Naive thymus-derived CD4-positive, alpha-beta T cell (primary cell): ENCODE measurements at regions of chr15 and their contacts with region 1.

Region 1: GRCh38 chr15:78108299-78109084 is 16.1 kb downstream of the SH2D7 start:
- DNase-seq: peak; percentile 73 to 86 (median 82)
- ATAC-seq: peak; percentile 91
- H3K4me3 ChIP-seq: no peak overlapping the region
- H3K4me3 Mint-ChIP-seq: peak overlapping the region in 1 of 10 donors; percentile 40
- H3K27ac ChIP-seq: no peak overlapping the region
- H3K27ac Mint-ChIP-seq: peak overlapping the region in 6 of 9 donors; percentile 14 to 69 (median 52)
- H3K4me1 ChIP-seq: peaks cover 18 to 32% of the 10 kb centered on the region in 2 donors
- H3K4me1 Mint-ChIP-seq: peaks cover 25 to 57% (median 28%) of the 10 kb centered on the region in 7 donors
- H3K27me3 ChIP-seq: no peaks in the 10 kb centered on the region
- H3K27me3 Mint-ChIP-seq: no peaks in the 10 kb centered on the region

Region 2: GRCh38 chr15:77901974-77902750 is 206.3 kb before region 1 on chr15:
- CTCF ChIA-PET with region 1: no interaction called
- POLR2A ChIA-PET with region 1: no interaction called
- intact Hi-C with region 1: no loop called
- DNase-seq: no peak
- ATAC-seq: no peak
- H3K4me3 ChIP-seq: no peak overlapping the region
- H3K4me3 Mint-ChIP-seq: no peak overlapping the region
- H3K27ac ChIP-seq: no peak overlapping the region
- H3K27ac Mint-ChIP-seq: no peak overlapping the region
- H3K4me1 ChIP-seq: no peaks in the 10 kb centered on the region
- H3K4me1 Mint-ChIP-seq: no peaks in the 10 kb centered on the region
- H3K27me3 ChIP-seq: no peaks in the 10 kb centered on the region
- H3K27me3 Mint-ChIP-seq: peaks cover 0 to under 1% (median 0%) of the 10 kb centered on the region in 5 donors

Region 3: GRCh38 chr15:77959432-77959879 is 149.0 kb before region 1 on chr15:
- CTCF ChIA-PET with region 1: interaction called, 84 read pairs
- POLR2A ChIA-PET with region 1: interaction called, 5 read pairs
- intact Hi-C with region 1: loop called (anchors 1 kb)
- DNase-seq: peak; percentile 41 to 81 (median 57)
- ATAC-seq: peak; percentile 97
- H3K4me3 ChIP-seq: no peak overlapping the region
- H3K4me3 Mint-ChIP-seq: peak overlapping the region in 5 of 10 donors; percentile 14 to 52 (median 35)
- H3K27ac ChIP-seq: no peak overlapping the region
- H3K27ac Mint-ChIP-seq: no peak overlapping the region
- H3K4me1 ChIP-seq: peaks cover 0 to 4% of the 10 kb centered on the region in 2 donors
- H3K4me1 Mint-ChIP-seq: peaks cover 0 to 17% (median 4%) of the 10 kb centered on the region in 7 donors
- H3K27me3 ChIP-seq: no peaks in the 10 kb centered on the region
- H3K27me3 Mint-ChIP-seq: peaks cover 5 to 38% (median 7%) of the 10 kb centered on the region in 5 donors

Region 4: GRCh38 chr15:78018946-78019644 is 89.4 kb before region 1 on chr15:
- CTCF ChIA-PET with region 1: interaction called, 16 read pairs
- POLR2A ChIA-PET with region 1: no interaction called
- intact Hi-C with region 1: no loop called
- DNase-seq: peak in 1 of 9 donors; percentile 22
- ATAC-seq: peak; percentile 88
- H3K4me3 ChIP-seq: no peak overlapping the region
- H3K4me3 Mint-ChIP-seq: peak overlapping the region in 6 of 10 donors; percentile 7 to 44 (median 30)
- H3K27ac ChIP-seq: no peak overlapping the region
- H3K27ac Mint-ChIP-seq: peak overlapping the region; percentile 33 to 90 (median 65)
- H3K4me1 ChIP-seq: no peaks in the 10 kb centered on the region
- H3K4me1 Mint-ChIP-seq: peaks cover 14 to 39% (median 20%) of the 10 kb centered on the region in 7 donors
- H3K27me3 ChIP-seq: no peaks in the 10 kb centered on the region
- H3K27me3 Mint-ChIP-seq: no peaks in the 10 kb centered on the region

Region 5: GRCh38 chr15:78077058-78077877 is 31.2 kb before region 1 on chr15 and contains the start of gene TBC1D2B:
- CTCF ChIA-PET with region 1: interaction called, 7 read pairs
- POLR2A ChIA-PET with region 1: no interaction called
- intact Hi-C with region 1: loop called (anchors 1 to 2 kb)
- DNase-seq: peak; percentile 51 to 79 (median 65)
- ATAC-seq: peak; percentile 90
- H3K4me3 ChIP-seq: peak within 1 kb of the TSS; percentile 98
- H3K4me3 Mint-ChIP-seq: peak within 1 kb of the TSS; percentile 92 to 100 (median 98)
- H3K27ac ChIP-seq: peak within 1 kb of the TSS; percentile 70
- H3K27ac Mint-ChIP-seq: peak within 1 kb of the TSS; percentile 88 to 98 (median 95)
- H3K4me1 ChIP-seq: peaks cover 33 to 34% of the 10 kb centered on the region in 2 donors
- H3K4me1 Mint-ChIP-seq: peaks cover 36 to 56% (median 46%) of the 10 kb centered on the region in 7 donors
- H3K27me3 ChIP-seq: no peaks in the 10 kb centered on the region
- H3K27me3 Mint-ChIP-seq: no peaks in the 10 kb centered on the region
- total RNA-seq, gene TBC1D2B: 69.7 to 119 (median 86.1) TPM

Region 6: DNA sequence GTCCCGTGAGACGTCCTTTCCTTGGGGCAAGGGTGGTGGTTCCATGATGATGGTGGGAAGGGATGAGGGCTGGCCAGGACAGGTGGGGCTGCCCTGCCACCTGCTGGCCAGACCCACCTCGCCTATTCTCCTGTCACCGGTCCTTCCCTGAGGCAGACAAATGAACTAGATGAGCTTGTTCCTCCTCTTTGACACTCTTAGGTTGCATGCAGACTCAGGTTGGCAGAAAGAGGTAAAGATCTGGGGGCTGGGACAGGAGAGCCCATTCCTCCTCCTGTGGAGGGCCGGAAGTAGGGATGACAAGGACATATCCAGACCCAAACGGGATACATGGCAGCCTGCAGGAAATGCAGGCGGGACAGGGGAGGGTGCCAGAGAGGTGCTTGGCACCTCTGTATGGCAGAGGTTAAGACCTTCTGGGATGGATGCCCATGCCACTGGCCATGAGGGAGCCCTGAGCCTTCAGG is 87.3 kb after region 1 on chr15:
- CTCF ChIA-PET with region 1: interaction called, 101 read pairs
- POLR2A ChIA-PET with region 1: interaction called, 4 read pairs
- intact Hi-C with region 1: loop called (anchors 1 kb)
- DNase-seq: peak; percentile 22 to 61 (median 46)
- ATAC-seq: peak; percentile 82
- H3K4me3 ChIP-seq: no peak overlapping the region
- H3K4me3 Mint-ChIP-seq: no peak overlapping the region
- H3K27ac ChIP-seq: no peak overlapping the region
- H3K27ac Mint-ChIP-seq: peak overlapping the region in 1 of 9 donors; percentile 36
- H3K4me1 ChIP-seq: no peaks in the 10 kb centered on the region
- H3K4me1 Mint-ChIP-seq: peaks cover 0 to 9% (median 0%) of the 10 kb centered on the region in 7 donors
- H3K27me3 ChIP-seq: no peaks in the 10 kb centered on the region
- H3K27me3 Mint-ChIP-seq: peaks cover 0 to 11% (median 0%) of the 10 kb centered on the region in 5 donors

Region 7: DNA sequence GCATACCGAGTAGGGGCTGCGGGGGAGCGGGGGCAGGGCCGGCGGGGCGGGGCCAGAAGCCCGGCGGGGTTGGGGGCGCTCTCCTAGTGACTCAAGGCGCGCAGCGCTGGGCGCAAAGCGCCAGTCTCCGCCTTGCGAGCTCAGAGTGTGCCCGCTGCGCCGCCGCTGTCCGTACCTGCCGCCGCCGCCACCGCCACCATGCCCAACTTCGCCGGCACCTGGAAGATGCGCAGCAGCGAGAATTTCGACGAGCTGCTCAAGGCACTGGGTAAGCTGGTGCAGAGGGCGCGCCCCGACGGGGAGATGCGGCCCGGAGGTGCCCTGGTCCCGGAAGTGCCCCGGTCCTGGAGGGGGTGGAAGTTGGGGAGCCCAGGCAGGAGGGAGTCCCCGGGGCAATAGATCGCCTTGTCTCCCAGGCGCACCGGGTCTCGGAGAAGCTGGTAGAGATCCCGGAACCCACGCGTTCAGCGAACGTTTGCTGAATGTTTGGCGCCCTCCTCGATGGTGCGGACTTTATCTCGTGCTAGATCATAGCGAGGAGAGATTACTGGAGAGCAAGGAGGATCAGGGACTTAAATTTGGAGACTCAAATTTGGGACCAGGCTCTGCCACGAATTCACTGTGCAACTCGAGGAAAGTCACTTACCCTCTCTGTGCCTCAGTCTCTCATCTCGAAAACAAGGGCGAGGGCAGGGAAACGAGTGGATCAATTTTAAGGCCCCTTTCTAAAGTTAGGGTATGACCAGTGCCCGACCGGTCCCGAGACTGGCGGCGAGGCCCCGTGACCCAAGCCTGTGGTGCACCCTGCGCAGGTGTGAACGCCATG is 232.0 kb after region 1 on chr15 and contains the start of gene CRABP1:
- CTCF ChIA-PET with region 1: no interaction called
- POLR2A ChIA-PET with region 1: no interaction called
- intact Hi-C with region 1: no loop called
- DNase-seq: no peak
- ATAC-seq: no peak
- H3K4me3 ChIP-seq: no peak within 1 kb of the TSS
- H3K4me3 Mint-ChIP-seq: peak within 1 kb of the TSS in 2 of 10 donors; percentile 13 to 40
- H3K27ac ChIP-seq: no peak within 1 kb of the TSS
- H3K27ac Mint-ChIP-seq: no peak within 1 kb of the TSS
- H3K4me1 ChIP-seq: no peaks in the 10 kb centered on the region
- H3K4me1 Mint-ChIP-seq: peaks cover 0 to 9% (median 4%) of the 10 kb centered on the region in 7 donors
- H3K27me3 ChIP-seq: peaks cover 0 to 10% of the 10 kb centered on the region in 2 donors
- H3K27me3 Mint-ChIP-seq: peaks cover 29 to 68% (median 47%) of the 10 kb centered on the region in 5 donors
- total RNA-seq, gene CRABP1: not detected

Region 8: DNA sequence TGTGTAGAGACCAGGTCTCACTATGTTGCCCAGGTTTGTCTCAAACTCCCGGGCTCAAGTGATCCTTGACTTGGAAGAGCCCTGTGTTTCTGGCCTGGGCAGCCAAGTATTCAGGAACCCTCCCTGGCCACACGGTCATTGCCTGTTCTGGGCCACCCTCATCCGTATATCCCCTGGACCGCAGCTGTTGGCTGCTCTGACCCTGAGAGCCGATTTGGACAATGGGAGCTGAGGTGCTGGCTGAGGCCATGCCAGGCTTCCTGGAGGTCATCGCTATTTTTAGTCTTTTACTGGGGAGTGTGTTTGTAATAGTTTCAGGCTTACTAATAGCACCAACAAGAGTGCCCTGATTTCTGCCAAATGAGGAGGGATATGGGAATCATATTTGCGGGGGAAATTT is 642.1 kb after region 1 on chr15:
- CTCF ChIA-PET with region 1: no interaction called
- POLR2A ChIA-PET with region 1: no interaction called
- intact Hi-C with region 1: loop called in 1 of 2 experiments (anchors 1 kb)
- DNase-seq: no peak
- ATAC-seq: no peak
- H3K4me3 ChIP-seq: no peak overlapping the region
- H3K4me3 Mint-ChIP-seq: peak overlapping the region; percentile 29 to 76 (median 58)
- H3K27ac ChIP-seq: no peak overlapping the region
- H3K27ac Mint-ChIP-seq: peak overlapping the region in 2 of 9 donors; percentile 22 to 43
- H3K4me1 ChIP-seq: peaks cover 0 to 6% of the 10 kb centered on the region in 2 donors
- H3K4me1 Mint-ChIP-seq: peaks cover 4 to 6% (median 5%) of the 10 kb centered on the region in 7 donors
- H3K27me3 ChIP-seq: no peaks in the 10 kb centered on the region
- H3K27me3 Mint-ChIP-seq: no peaks in the 10 kb centered on the region

Region 9: DNA sequence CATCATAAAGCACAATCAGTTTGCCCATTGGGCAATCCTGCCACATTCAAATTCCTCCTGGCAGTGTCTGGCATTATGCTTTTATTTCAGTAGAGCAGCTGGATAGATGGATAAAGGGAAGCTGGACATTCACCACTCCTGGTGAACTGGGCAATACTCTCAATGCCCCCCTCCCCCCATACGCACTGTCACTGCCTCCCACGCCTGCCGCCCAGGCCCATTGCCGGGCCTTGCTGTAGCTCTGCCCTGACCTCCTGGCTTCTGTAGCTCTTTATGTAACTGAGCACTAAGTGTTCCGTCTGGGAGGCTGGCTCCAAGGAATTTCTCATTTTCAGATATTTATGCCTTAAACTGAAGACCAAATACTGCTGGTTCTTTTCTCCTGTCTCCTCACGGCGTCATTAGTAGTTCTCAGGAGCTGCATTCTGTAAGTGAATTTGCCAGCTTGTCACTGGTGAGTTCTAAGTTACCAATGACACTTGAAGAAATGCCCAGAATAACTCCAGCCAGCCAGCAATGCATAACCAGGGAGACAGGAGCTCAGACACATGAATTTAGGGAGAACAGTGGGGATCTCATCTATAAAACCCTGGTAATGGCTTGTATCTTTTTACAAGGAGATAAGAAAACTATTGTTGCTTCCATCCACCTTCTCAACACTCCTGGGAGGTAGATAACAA is 1007.6 kb after region 1 on chr15:
- CTCF ChIA-PET with region 1: no interaction called
- POLR2A ChIA-PET with region 1: no interaction called
- intact Hi-C with region 1: no loop called
- DNase-seq: no peak
- ATAC-seq: no peak
- H3K4me3 ChIP-seq: no peak overlapping the region
- H3K4me3 Mint-ChIP-seq: no peak overlapping the region
- H3K27ac ChIP-seq: no peak overlapping the region
- H3K27ac Mint-ChIP-seq: no peak overlapping the region
- H3K4me1 ChIP-seq: no peaks in the 10 kb centered on the region
- H3K4me1 Mint-ChIP-seq: no peaks in the 10 kb centered on the region
- H3K27me3 ChIP-seq: no peaks in the 10 kb centered on the region
- H3K27me3 Mint-ChIP-seq: peaks cover 8 to 28% (median 21%) of the 10 kb centered on the region in 5 donors

Region 10: DNA sequence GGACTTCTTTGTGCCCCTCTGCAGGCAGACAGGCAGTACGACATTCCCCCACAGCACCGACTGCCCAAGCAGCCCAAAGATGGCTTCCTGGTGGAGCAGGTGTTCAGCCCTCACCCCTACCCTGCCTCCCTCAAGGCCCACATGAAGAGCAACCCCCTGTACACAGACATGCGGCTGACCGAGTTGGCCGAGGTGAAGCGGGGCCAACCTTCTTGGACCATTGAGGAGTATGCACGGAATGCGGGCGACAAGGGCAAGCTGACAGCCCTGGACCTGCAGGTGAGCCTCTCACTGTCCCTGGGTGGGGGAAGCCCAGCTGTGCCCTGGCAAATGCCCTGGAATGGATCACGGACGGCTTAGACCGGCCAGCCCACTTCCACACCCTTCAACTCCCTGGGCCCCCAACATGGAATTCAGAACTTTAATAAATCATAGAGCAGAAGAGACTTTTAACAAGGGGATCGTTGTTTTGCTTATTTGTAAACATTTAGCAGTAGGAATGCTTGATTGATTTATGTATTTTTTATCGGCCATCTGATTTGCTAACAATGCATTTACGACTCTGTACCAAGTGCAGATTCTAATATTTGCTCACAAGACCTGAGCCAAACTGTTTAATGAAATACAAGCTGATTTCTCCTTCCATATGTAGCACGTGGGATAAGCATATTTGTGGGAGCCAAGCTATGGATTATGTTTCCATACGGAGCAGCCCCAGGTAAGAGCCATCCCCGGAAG is 1354.7 kb after region 1 on chr15:
- CTCF ChIA-PET with region 1: no interaction called
- POLR2A ChIA-PET with region 1: no interaction called
- intact Hi-C with region 1: no loop called
- DNase-seq: no peak
- ATAC-seq: no peak
- H3K4me3 ChIP-seq: no peak overlapping the region
- H3K4me3 Mint-ChIP-seq: no peak overlapping the region
- H3K27ac ChIP-seq: no peak overlapping the region
- H3K27ac Mint-ChIP-seq: no peak overlapping the region
- H3K4me1 ChIP-seq: no peaks in the 10 kb centered on the region
- H3K4me1 Mint-ChIP-seq: no peaks in the 10 kb centered on the region
- H3K27me3 ChIP-seq: no peaks in the 10 kb centered on the region
- H3K27me3 Mint-ChIP-seq: no peaks in the 10 kb centered on the region